ENCODE measurements at regions of chr11 and their contacts with region 1.

Region 1: DNA sequence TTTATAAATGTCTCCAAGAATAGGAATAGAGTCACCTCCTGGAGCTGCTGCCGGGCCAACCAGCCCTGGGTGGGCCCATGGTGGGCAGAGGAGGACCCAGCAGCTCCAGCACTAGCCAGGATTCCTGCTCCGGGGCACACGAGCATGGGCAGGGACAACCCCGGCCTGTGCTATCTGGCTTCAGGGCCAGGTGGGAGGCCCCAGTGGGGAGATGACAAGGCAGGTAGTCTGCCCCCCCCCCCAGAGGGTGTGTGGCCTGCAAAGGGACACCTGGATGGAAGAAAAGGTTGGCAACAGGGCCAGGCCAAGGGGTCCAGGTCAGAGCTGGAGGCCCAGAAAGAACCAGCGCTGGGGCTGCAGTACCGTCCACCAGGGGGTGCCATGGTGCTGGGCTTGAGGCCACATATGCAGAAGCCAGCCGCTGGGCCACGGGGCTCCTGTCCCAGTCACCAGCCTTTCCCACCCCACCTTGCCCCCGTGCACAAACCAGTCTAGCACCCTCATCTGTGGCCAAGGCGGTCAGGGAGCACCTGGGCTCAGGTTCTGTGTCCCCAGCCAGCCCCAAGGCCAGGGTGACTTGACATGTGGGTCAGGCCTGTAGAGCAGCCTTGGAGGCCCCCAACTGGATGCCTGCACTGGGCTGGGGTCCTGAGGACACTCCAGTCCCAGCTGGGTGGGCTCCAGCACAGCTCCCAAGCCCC is 3.5 kb downstream of the TSPAN32 start:
- DNase-seq: peak; percentile 89
- ATAC-seq: peak; percentile 60
- H3K4me3 Mint-ChIP-seq: peak overlapping the region; percentile 69
- H3K27ac Mint-ChIP-seq: peak overlapping the region; percentile 84
- H3K4me1 Mint-ChIP-seq: peaks cover 42% of the 10 kb centered on the region
- H3K27me3 Mint-ChIP-seq: no peaks in the 10 kb centered on the region

Region 2: DNA sequence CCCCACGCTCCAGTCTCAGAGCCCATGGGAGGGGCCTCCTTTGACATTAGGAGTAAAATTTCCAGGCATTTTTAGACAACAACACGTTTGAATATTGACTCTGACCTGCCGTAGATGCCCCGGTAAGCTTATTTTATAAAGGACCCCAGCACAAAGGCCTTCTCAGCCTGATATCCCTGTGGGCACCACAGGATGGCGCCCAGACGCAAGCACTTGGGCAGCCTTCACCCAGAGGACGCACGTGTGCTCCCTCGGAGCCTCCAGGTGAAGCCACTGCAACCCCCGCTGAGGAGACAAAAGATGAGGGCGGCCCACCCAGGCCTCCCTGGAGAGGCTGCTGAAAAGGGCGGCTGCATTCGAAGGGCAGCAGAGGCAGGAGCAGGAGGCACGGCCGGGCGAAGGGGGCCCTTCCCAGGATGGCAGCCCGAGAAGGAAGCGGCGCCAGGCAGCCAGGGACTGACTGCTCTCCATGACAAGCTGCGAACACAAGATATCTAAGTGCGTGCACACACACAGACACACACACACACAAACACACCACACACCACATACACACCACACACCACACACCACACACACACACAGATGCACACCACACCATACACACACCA is 118.5 kb before region 1 on chr11:
- CTCF ChIA-PET with region 1: interaction called, 11 read pairs
- DNase-seq: peak; percentile 60
- ATAC-seq: peak; percentile 77
- H3K4me3 Mint-ChIP-seq: no peak overlapping the region
- H3K27ac Mint-ChIP-seq: no peak overlapping the region
- H3K4me1 Mint-ChIP-seq: no peaks in the 10 kb centered on the region
- H3K27me3 Mint-ChIP-seq: peaks cover 6% of the 10 kb centered on the region

Region 3: GRCh38 chr11:2196970-2197770 is 108.1 kb before region 1 on chr11:
- CTCF ChIA-PET with region 1: interaction called, 27 read pairs
- DNase-seq: peak; percentile 83
- ATAC-seq: peak; percentile 86
- H3K4me3 Mint-ChIP-seq: no peak overlapping the region
- H3K27ac Mint-ChIP-seq: no peak overlapping the region
- H3K4me1 Mint-ChIP-seq: peaks cover 3% of the 10 kb centered on the region
- H3K27me3 Mint-ChIP-seq: peaks cover 9% of the 10 kb centered on the region

Region 4: DNA sequence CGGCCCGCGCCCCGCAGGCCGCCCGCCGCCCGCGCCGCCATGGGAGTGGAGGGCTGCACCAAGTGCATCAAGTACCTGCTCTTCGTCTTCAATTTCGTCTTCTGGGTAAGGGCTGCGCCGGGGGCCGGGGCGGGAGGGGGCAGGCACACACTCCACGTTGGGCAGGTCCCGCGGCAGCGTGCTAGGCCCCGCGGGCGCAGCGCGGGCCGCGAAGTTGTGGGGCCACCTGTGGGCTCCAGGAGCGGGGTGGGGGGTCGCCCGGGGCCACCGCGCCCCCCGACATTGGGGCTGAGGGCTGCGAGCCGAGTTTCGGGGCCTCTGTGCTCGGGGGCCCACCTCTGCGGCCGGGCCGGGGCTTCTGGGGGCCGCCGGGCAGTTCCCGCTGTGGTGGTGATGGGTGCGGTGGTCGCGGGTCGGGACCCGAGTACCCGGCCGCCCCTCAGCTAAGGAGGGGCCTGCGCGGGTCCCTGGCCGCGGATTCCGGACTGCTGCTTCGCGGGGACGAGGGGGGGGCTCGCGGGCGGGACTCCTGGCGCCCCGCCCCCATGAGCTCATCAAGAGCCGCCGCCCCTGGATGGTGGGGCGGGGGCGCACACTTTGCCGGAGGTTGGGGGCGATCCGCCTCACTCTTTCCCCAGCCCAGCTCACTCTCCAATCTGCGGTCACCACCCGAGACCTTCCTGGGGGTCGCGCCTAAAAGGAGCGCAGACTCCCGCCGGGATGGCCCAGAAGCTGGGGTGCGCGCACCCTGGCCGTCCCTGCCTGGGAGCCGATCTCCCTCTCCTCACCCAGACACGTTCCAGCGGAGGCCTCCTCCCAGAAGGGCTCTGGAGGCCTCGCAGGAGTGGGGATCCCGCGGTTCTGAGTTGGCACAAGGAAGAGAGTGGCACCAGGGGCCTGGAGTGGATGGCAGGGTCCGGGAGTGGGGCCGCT is 72.5 kb after region 1 on chr11:
- CTCF ChIA-PET with region 1: interaction called, 36 read pairs
- DNase-seq: peak; percentile 68
- ATAC-seq: peak; percentile 46
- H3K4me3 Mint-ChIP-seq: peak overlapping the region; percentile 83
- H3K27ac Mint-ChIP-seq: peak overlapping the region; percentile 78
- H3K4me1 Mint-ChIP-seq: peaks cover 24% of the 10 kb centered on the region
- H3K27me3 Mint-ChIP-seq: peaks cover 4% of the 10 kb centered on the region

Region 5: GRCh38 chr11:2387266-2387987 is 82.1 kb after region 1 on chr11:
- CTCF ChIA-PET with region 1: interaction called, 30 read pairs
- DNase-seq: peak; percentile 65
- ATAC-seq: peak; percentile 40
- H3K4me3 Mint-ChIP-seq: peak overlapping the region; percentile 11
- H3K27ac Mint-ChIP-seq: peak overlapping the region; percentile 84
- H3K4me1 Mint-ChIP-seq: peaks cover 65% of the 10 kb centered on the region
- H3K27me3 Mint-ChIP-seq: no peaks in the 10 kb centered on the region

Region 6: DNA sequence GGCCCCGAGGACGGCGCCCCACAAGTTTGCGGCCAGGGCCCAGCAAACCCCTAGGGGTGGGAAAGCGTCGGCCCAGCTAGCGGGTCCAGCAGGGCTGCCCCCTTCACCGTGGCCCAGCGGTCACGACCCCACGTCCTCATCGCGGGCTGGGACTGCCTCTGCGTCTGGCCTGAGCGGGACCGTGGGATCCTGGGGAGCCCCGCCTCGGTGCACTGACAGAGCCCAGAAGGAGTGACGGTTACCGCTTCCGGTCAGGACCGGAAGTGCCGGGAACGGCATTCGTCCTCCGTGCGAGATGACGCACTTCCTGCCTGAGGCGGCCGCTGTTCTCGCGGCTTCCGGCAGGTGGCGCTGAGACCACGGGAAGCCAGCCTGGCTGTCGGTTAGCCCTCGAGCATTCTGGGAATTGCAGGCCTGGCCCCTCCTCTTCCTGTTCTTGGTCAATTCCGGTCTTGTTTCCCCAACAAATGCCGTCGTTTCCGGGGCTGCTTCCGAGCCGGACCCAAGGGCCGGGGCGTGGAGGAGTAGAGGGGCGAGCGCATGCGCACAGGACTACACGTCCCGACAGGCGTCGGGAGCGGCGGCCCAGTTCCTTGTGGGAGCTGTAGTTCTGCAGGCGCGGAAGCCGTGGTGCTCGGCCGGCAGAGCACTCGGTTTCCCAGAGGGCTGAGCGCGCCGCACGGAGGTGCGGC is 94.9 kb after region 1 on chr11 and contains the start of gene TSSC4:
- CTCF ChIA-PET with region 1: interaction called, 109 read pairs
- DNase-seq: peak; percentile 100
- ATAC-seq: peak; percentile 85
- H3K4me3 Mint-ChIP-seq: peak within 1 kb of the TSS; percentile 79
- H3K27ac Mint-ChIP-seq: peak within 1 kb of the TSS; percentile 87
- H3K4me1 Mint-ChIP-seq: peaks cover 16% of the 10 kb centered on the region
- H3K27me3 Mint-ChIP-seq: no peaks in the 10 kb centered on the region
- total RNA-seq, gene TSSC4: 48.4 to 52.1 TPM

Region 7: GRCh38 chr11:2885676-2886081 is 580.4 kb after region 1 on chr11 and contains the start of gene CDKN1C:
- CTCF ChIA-PET with region 1: interaction called, 21 read pairs
- DNase-seq: peak; percentile 83
- ATAC-seq: peak; percentile 92
- H3K4me3 Mint-ChIP-seq: peak within 1 kb of the TSS; percentile 75
- H3K27ac Mint-ChIP-seq: no peak within 1 kb of the TSS
- H3K4me1 Mint-ChIP-seq: peaks cover 9% of the 10 kb centered on the region
- H3K27me3 Mint-ChIP-seq: peaks cover 35% of the 10 kb centered on the region
- total RNA-seq, gene CDKN1C: 0.44 to 0.87 TPM